Activated naive CD4-positive, alpha-beta T cell treated with anti-CD3 and anti-CD28 coated beads, Interleukin-2, amount 10 ng/mL, durations not matched to agents 7 days and 5 days (primary cell): ENCODE measurements at regions of chr2 and their contacts with region 1.

Region 1: GRCh38 chr2:25276569-25277465 is 64.9 kb downstream of the DNMT3A start:
- DNase-seq: peak; percentile 82
- H3K4me3 Mint-ChIP-seq: peak overlapping the region; percentile 49
- H3K27ac Mint-ChIP-seq: peak overlapping the region; percentile 97
- H3K4me1 Mint-ChIP-seq: peaks cover 86% of the 10 kb centered on the region
- H3K27me3 Mint-ChIP-seq: no peaks in the 10 kb centered on the region

Region 2: DNA sequence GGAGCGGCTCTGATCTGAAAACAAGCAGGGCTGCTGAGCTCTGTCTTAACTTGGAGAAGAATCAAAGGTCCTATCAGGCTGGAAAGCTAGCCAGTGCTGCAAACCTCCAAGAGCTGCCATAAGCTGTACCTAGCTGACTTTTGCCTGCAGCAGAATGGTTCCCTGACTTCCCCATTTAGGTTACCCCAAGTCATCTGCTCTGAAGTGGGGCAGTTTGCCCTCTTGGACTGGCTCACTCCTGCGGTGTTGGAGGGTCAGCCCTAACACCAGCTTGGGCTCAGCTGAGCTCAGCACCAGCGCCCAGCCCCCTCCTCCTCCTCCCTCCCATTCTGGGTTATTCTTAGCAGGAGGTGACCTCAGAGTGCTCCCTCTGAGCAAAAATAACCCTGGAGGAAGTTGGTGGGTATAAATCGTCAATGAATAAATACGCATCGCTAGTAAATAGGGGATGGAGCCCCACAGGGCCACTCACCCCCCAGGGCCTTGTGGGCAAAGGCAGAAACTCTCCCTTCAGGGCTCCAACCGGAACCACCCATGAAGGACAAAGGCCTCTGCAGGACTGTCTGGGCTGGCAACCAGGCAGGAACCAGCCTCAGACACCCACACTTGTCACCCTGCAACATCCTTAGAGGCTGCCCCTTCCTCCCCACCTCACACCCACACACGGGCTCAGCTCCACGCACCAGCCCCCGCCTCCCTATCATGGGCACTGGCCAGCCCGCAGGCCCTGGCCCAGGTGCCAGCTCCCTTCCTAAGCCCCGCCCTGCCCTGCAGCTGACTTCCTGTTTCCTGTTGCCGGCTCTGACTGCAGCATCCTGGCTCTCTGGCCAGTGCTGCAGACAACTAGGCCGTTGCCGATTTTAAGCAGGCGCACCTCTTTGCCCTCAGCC is 18.0 kb after region 1 on chr2:
- CTCF ChIA-PET with region 1: interaction called, 36 read pairs
- DNase-seq: peak; percentile 93
- H3K4me3 Mint-ChIP-seq: peak overlapping the region; percentile 61
- H3K27ac Mint-ChIP-seq: peak overlapping the region; percentile 97
- H3K4me1 Mint-ChIP-seq: peaks cover 72% of the 10 kb centered on the region
- H3K27me3 Mint-ChIP-seq: no peaks in the 10 kb centered on the region

Region 3: DNA sequence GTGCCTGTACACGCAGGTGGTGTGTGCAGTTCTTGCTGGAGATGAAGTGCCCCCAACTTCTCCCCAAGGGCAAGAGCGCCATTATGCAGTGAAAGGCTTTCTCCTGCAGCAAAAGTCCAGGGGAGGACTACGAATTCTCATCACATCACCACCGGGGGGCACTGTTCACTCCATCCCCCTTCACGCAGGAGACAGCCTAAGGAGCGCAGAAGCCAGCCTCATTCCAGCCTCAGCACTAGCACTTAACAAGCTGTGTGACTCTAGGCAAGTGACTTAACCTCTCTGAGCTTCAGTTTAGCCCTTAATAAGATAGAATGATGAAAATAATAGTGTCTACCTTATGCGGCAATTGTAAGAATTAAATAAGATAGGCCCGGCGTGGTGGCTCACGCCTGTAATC is 32.6 kb after region 1 on chr2:
- CTCF ChIA-PET with region 1: interaction called, 18 read pairs
- DNase-seq: peak; percentile 81
- H3K4me3 Mint-ChIP-seq: no peak overlapping the region
- H3K27ac Mint-ChIP-seq: no peak overlapping the region
- H3K4me1 Mint-ChIP-seq: peaks cover 73% of the 10 kb centered on the region
- H3K27me3 Mint-ChIP-seq: no peaks in the 10 kb centered on the region

Region 4: DNA sequence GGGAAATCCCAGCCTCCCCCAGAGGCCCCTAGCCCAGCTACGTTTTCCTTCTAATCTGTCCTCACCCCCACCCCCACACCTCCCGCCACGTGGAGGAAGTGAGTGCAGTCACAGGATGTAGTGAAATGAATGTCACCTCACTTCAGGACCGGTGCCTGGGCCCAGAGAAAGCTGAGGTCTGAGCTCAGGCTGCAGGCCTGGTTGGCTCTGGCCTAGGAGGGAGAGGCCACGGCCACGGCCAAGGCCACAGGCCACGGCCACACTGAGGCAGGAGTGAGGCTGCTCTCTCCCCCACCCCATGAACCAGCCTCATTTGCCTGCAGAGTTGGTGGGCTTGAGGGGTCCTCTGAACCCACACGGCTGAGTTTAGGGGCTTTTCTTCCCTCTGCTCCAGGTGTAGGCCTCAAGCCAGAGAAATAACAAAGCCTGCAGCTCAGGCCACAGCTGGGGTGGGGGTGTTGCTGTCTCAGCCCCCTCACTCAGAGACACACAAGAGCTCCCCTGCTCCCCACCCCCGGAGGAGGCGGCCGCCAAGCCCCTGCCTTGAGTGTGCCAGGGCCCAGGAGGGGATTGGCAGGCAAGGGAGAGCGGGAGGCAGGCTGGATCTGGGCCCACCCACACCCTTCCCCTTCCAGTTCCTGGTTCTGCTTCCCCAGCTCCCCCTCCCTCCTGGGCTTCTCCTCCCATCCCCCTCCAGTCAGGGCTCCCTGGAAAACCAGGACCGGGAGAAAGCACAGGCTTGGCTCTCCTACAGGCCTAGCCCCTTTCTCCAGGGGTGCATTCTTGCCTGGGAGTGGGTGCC is 37.9 kb after region 1 on chr2:
- CTCF ChIA-PET with region 1: interaction called, 18 read pairs
- DNase-seq: peak; percentile 88
- H3K4me3 Mint-ChIP-seq: peak overlapping the region; percentile 77
- H3K27ac Mint-ChIP-seq: peak overlapping the region; percentile 96
- H3K4me1 Mint-ChIP-seq: peaks cover 75% of the 10 kb centered on the region
- H3K27me3 Mint-ChIP-seq: no peaks in the 10 kb centered on the region

Region 5: DNA sequence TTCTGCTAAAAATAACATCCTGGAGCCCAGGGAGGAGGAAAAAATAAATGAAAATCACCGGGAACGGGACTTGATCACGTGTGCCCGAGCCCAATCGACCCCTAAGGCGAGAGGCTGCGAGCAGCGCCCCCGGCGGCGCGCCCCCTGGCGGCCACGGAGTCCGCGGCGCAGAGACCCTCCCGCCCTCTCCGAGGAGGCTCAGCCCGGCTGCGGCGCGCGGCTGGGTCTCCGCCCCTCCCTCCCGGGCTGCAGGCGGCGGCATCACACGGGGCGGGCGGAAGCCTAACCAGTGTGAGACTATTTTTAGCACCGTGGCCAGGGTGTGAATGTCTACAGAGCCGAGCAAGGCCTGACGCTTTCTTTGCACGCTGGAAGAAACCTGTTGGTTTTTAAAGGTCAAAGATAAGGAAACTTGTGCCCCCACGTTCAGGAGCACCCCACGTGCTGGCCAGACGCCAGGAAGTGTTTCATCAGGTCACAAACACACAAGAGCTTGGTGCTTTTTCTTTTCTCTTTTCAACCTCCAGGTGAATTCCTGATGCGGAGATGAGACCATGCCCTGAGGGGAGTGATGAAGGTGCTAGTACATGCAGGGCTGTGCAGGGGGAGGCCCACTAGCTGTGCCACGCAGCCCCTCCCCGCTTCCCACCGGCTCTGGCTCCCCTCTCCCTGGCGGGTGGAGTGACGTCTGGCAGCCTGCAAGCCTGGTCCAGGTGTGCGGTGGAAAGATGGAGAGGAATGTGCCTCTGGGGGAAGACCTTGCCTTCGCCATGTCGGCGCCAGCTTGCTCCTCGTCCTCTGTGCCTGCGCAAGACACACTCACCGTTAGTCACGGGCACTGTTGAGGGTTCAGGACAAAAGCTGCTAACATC is 100.2 kb after region 1 on chr2:
- CTCF ChIA-PET with region 1: interaction called, 14 read pairs
- DNase-seq: peak; percentile 94
- H3K4me3 Mint-ChIP-seq: peak overlapping the region; percentile 65
- H3K27ac Mint-ChIP-seq: peak overlapping the region; percentile 100
- H3K4me1 Mint-ChIP-seq: peaks cover 42% of the 10 kb centered on the region
- H3K27me3 Mint-ChIP-seq: no peaks in the 10 kb centered on the region